HEK293 (cell line): ENCODE measurements at regions of chr5 and their contacts with region 1.

Region 1: GRCh38 chr5:64229163-64229774 is 63.6 kb downstream of the RNF180 start:
- H3K4me3 ChIP-seq: no peak overlapping the region
- H3K27ac ChIP-seq: no peak overlapping the region
- H3K4me1 ChIP-seq: no peaks in the 10 kb centered on the region
- CTCF ChIP-seq: no peak

Region 2: GRCh38 chr5:64147849-64148441 is 81.3 kb before region 1 on chr5:
- CTCF ChIA-PET with region 1: interaction called, 13 read pairs
- POLR2A ChIA-PET with region 1: no interaction called
- H3K4me3 ChIP-seq: no peak overlapping the region
- H3K27ac ChIP-seq: no peak overlapping the region
- H3K4me1 ChIP-seq: no peaks in the 10 kb centered on the region
- CTCF ChIP-seq: peak; percentile 64; the same call in 1 of the 2 replicates

Region 3: DNA sequence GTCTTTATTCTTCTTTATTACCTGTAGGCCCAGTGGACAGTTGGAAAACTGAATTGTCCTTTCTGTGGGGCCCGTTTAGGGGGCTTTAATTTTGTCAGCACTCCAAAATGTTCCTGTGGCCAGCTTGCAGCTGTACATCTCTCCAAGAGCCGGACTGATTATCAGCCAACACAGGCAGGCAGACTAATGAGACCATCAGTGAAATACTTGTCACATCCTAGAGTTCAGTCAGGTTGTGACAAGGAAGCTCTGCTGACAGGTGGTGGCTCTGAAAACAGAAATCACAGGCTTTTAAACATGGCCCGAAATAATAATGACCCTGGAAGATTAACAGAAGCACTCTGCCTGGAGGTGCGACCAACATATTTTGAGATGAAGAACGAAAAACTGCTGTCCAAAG is 15.7 kb before region 1 on chr5:
- CTCF ChIA-PET with region 1: interaction called, 14 read pairs
- POLR2A ChIA-PET with region 1: no interaction called
- H3K4me3 ChIP-seq: no peak overlapping the region
- H3K27ac ChIP-seq: no peak overlapping the region
- H3K4me1 ChIP-seq: no peaks in the 10 kb centered on the region
- CTCF ChIP-seq: no peak

Region 4: GRCh38 chr5:64612344-64612961 is 383.2 kb after region 1 on chr5:
- CTCF ChIA-PET with region 1: interaction called, 91 read pairs
- POLR2A ChIA-PET with region 1: no interaction called
- H3K4me3 ChIP-seq: no peak overlapping the region
- H3K27ac ChIP-seq: no peak overlapping the region
- H3K4me1 ChIP-seq: no peaks in the 10 kb centered on the region
- CTCF ChIP-seq: peak; percentile 56; the same call in 1 of the 2 replicates